MCF 10A (cell line): ENCODE measurements at regions of chr17 and their contacts with region 1.

Region 1: DNA sequence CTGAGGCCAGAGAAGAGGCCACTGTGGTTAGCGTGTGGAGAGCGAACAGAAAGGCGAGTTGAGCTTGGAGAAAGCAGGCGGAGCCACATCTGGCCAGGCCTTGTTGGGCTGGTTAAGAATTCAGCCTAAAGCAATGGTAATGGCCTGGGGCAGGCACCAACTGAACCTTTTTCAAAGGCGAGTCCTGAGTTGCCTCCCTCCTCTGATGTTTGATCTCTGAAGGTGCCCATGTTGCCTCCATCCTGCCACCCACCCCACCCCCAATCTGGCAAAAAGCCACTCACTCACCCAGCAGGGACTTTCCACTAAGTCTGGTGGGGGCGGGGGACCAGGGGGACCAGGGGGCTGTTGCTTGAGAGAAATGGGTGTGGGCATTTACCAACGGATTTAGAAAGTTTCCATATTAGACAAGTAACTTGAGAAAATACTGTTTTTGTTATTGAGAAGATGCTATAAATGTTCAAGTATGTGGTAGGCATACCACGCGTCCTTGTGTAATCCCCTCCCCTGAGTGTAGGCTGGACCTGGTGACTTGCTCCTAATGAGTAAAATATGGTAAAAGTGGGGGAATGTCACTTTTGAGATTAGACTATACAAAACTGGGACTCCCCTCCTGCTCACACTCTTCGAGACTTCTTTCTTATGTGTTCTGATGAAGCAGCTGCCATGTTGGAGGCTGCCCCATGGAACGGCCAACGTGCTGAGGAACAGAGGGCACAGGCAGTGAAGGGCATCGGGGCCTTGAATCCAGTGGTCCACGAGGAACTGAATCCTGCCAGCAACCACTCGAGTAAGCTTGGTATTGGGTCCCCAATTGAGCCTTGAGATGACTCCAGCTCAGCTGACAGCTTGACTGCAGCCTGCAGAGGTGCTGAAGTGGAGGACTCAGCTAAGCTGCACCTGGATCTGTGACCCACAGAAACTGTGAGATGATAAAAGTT is 29.9 kb upstream of the TNS4 start:
- DNase-seq: no peak
- H3K4me3 Mint-ChIP-seq: no peak overlapping the region
- H3K27ac Mint-ChIP-seq: peak overlapping the region; percentile 24
- H3K4me1 Mint-ChIP-seq: peaks cover 37% of the 10 kb centered on the region
- H3K27me3 Mint-ChIP-seq: no peaks in the 10 kb centered on the region
- CTCF ChIP-seq: no peak

Region 2: GRCh38 chr17:40371261-40371929 is 159.9 kb before region 1 on chr17:
- CTCF ChIA-PET with region 1: no interaction called
- POLR2A ChIA-PET with region 1: no interaction called
- intact Hi-C with region 1: no loop called
- DNase-seq: no peak
- H3K4me3 Mint-ChIP-seq: no peak overlapping the region
- H3K27ac Mint-ChIP-seq: no peak overlapping the region
- H3K4me1 Mint-ChIP-seq: peaks cover 24% of the 10 kb centered on the region
- H3K27me3 Mint-ChIP-seq: no peaks in the 10 kb centered on the region
- CTCF ChIP-seq: no peak

Region 3: DNA sequence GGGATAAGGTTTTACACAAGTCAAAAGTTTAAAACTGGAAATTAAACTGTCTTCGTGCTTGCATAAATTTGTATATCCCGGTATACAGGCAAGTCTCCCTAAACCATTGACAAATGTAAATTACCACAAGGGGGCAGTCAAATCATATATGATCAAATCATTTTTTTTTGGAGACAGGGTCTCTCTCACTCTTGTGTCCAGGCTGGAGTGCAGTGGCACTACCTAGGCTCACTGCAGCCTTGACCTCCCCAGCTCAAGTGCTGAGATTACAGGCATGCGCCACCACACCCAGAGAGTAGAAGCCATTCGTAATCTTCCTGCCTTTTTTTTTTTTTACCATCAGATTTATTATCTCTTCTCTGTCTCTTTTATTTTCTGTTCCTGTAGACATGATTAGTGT is 132.1 kb before region 1 on chr17:
- CTCF ChIA-PET with region 1: interaction called, 5 read pairs
- POLR2A ChIA-PET with region 1: no interaction called
- intact Hi-C with region 1: loop called (anchors 1 kb)
- DNase-seq: peak; percentile 61
- H3K4me3 Mint-ChIP-seq: no peak overlapping the region
- H3K27ac Mint-ChIP-seq: no peak overlapping the region
- H3K4me1 Mint-ChIP-seq: peaks cover 6% of the 10 kb centered on the region
- H3K27me3 Mint-ChIP-seq: no peaks in the 10 kb centered on the region
- CTCF ChIP-seq: peak; percentile 46

Region 4: GRCh38 chr17:40443583-40444327 is 87.6 kb before region 1 on chr17:
- CTCF ChIA-PET with region 1: interaction called, 97 read pairs
- POLR2A ChIA-PET with region 1: interaction called, 8 read pairs
- intact Hi-C with region 1: loop called (anchors 1 kb)
- DNase-seq: peak; percentile 72
- H3K4me3 Mint-ChIP-seq: peak overlapping the region; percentile 65
- H3K27ac Mint-ChIP-seq: no peak overlapping the region
- H3K4me1 Mint-ChIP-seq: peaks cover 21% of the 10 kb centered on the region
- H3K27me3 Mint-ChIP-seq: peaks cover 31% of the 10 kb centered on the region
- CTCF ChIP-seq: peak; percentile 6

Region 5: GRCh38 chr17:40499551-40500174 is 31.7 kb before region 1 on chr17:
- CTCF ChIA-PET with region 1: interaction called, 22 read pairs
- POLR2A ChIA-PET with region 1: interaction called, 614 read pairs
- intact Hi-C with region 1: loop called (anchors 1 kb)
- DNase-seq: peak; percentile 90
- H3K4me3 Mint-ChIP-seq: peak overlapping the region; percentile 98
- H3K27ac Mint-ChIP-seq: peak overlapping the region; percentile 97
- H3K4me1 Mint-ChIP-seq: peaks cover 39% of the 10 kb centered on the region
- H3K27me3 Mint-ChIP-seq: no peaks in the 10 kb centered on the region
- CTCF ChIP-seq: no peak

Region 6: GRCh38 chr17:40516581-40517285 is 14.6 kb before region 1 on chr17:
- CTCF ChIA-PET with region 1: interaction called, 34 read pairs
- POLR2A ChIA-PET with region 1: interaction called, 17 read pairs
- intact Hi-C with region 1: no loop called
- DNase-seq: no peak
- H3K4me3 Mint-ChIP-seq: peak overlapping the region; percentile 58
- H3K27ac Mint-ChIP-seq: peak overlapping the region; percentile 87
- H3K4me1 Mint-ChIP-seq: peaks cover 63% of the 10 kb centered on the region
- H3K27me3 Mint-ChIP-seq: no peaks in the 10 kb centered on the region
- CTCF ChIP-seq: no peak

Region 7: GRCh38 chr17:40559954-40560591 is 28.8 kb after region 1 on chr17:
- CTCF ChIA-PET with region 1: interaction called, 90 read pairs
- POLR2A ChIA-PET with region 1: interaction called, 12 read pairs
- intact Hi-C with region 1: loop called (anchors 1 kb)
- DNase-seq: peak; percentile 98
- H3K4me3 Mint-ChIP-seq: no peak overlapping the region
- H3K27ac Mint-ChIP-seq: peak overlapping the region; percentile 8
- H3K4me1 Mint-ChIP-seq: peaks cover 6% of the 10 kb centered on the region
- H3K27me3 Mint-ChIP-seq: peaks cover 41% of the 10 kb centered on the region
- CTCF ChIP-seq: peak; percentile 97